Vagina (tissue), 2 donors: ENCODE measurements at regions of chr18 and their contacts with region 1.

Region 1: GRCh38 chr18:34639687-34640086 is 70.4 kb upstream of the DTNA start:
- DNase-seq: no peak
- H3K4me3 ChIP-seq: no peak overlapping the region
- H3K27ac ChIP-seq: no peak overlapping the region
- H3K4me1 ChIP-seq: no peaks in the 10 kb centered on the region
- H3K27me3 ChIP-seq: no peaks in the 10 kb centered on the region
- CTCF ChIP-seq: no peak
- POLR2A ChIP-seq: no peak

Region 2: GRCh38 chr18:34431042-34431441 is 208.6 kb before region 1 on chr18:
- intact Hi-C with region 1: loop called (anchors 5 kb)
- DNase-seq: no peak
- H3K4me3 ChIP-seq: no peak overlapping the region
- H3K27ac ChIP-seq: no peak overlapping the region
- H3K4me1 ChIP-seq: no peaks in the 10 kb centered on the region
- H3K27me3 ChIP-seq: no peaks in the 10 kb centered on the region
- CTCF ChIP-seq: no peak
- POLR2A ChIP-seq: no peak